ENCODE measurements at regions of chr21 and their contacts with region 1.

Region 1: GRCh38 chr21:41068967-41069642 is 98.9 kb upstream of the BACE2 start:
- DNase-seq: peak; percentile 80 to 85
- ATAC-seq: peak; percentile 86 to 92 (median 89)
- H3K4me3 ChIP-seq: peak overlapping the region in 9 of 10 donors; percentile 14 to 48 (median 41)
- H3K27ac ChIP-seq: no peak overlapping the region
- H3K4me1 ChIP-seq: peaks cover 0 to 17% (median 8%) of the 10 kb centered on the region in 9 donors
- H3K27me3 ChIP-seq: peaks cover 0 to 44% (median 14%) of the 10 kb centered on the region in 7 donors
- CTCF ChIP-seq: peak; percentile 83 to 96 (median 90)

Region 2: DNA sequence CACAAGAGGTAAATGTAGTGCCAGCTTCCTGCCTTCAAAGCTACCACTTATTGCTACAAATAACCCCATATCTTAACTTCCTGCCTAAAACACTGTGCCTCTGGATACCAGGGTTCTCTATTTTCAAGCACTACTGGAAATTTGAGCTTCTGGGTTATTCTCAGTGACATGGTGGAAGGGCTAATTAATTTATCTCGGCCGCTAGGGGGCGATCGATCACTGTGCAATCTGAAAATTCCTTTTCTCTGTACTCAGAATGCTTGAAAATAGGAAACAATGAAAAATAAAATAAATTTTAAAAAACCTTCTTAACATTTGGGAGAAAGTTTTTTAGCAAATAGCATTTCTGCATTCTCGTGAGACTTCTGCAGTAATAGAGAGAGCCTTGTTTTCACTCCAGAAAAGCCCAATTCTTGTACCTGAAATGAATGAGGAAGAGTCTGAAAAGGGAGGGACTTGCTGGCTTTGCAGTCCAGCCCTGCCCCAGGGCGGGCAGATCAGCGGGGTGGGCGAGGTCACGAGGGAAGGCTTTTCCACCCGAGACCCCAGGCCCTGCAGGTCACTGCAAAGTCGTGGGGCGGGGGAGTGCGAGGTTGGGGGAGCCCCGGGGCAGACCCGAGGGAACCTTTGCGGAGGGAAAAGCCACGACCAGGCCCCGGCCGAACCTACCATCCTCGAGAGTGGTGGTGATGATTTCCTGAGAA is 925.1 kb before region 1 on chr21:
- intact Hi-C with region 1: loop called in 9 of 10 experiments (anchors 5 to 10 kb)
- DNase-seq: peak; percentile 24 to 44
- ATAC-seq: peak in 3 of 8 donors; percentile 32 to 60 (median 53)
- H3K4me3 ChIP-seq: no peak overlapping the region
- H3K27ac ChIP-seq: no peak overlapping the region
- H3K4me1 ChIP-seq: no peaks in the 10 kb centered on the region
- H3K27me3 ChIP-seq: peaks cover 0 to 22% (median 0%) of the 10 kb centered on the region in 7 donors
- CTCF ChIP-seq: peak; percentile 45 to 84 (median 73)

Region 3: DNA sequence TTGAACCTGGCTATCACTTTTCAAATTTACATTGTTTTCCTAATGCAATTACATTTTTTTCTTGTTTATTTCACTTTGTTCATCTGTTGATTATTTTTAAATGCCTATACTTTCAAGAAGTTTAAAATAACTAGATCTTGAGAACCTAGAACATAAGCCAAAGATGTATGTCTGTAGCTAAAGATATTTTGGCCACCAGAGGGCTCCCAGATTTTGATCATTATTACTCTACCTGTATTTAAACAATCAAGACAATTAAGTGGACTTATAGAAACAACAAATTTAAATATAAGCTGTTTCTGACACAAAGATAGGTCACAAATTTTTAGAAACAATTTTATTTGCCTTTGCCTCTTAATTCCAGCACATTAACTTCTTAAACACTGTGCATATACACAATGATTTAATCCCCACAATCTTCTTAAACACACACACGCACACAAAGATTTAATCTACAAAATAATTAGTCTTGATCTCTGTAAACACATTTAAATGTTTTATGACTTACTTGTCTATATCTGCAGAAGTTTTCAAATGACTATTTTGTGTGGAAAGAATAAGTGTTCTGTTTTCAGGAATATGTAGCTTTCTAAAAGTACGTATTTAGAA is 602.1 kb before region 1 on chr21:
- intact Hi-C with region 1: loop called (anchors 1 to 10 kb)
- DNase-seq: peak in 1 of 2 donors; percentile 7
- ATAC-seq: no peak
- H3K4me3 ChIP-seq: no peak overlapping the region
- H3K27ac ChIP-seq: no peak overlapping the region
- H3K4me1 ChIP-seq: no peaks in the 10 kb centered on the region
- H3K27me3 ChIP-seq: peaks cover 0 to 11% (median 0%) of the 10 kb centered on the region in 7 donors
- CTCF ChIP-seq: peak in 8 of 9 donors; percentile 9 to 60 (median 46)

Region 4: DNA sequence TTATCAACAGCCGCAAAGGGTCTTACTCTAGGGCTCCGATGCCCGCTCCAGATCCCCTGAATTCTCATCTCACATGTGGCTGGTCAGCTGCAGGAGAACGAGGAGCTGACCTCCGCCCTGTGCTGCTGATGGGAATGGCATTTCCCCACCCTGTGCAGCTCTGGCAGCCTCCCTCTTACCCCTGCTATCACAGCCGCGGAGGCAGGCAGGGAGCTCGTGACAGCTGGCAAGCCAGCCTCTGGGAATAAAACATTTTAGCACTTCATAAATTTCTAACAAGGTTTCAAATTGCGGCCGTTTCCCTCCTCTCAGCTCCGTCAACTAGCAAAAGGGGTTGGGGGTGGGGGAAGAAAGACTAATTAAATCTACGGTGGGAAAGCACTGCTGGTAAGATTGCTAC is 303.3 kb before region 1 on chr21:
- intact Hi-C with region 1: no loop called
- DNase-seq: no peak
- ATAC-seq: no peak
- H3K4me3 ChIP-seq: no peak overlapping the region
- H3K27ac ChIP-seq: no peak overlapping the region
- H3K4me1 ChIP-seq: no peaks in the 10 kb centered on the region
- H3K27me3 ChIP-seq: peaks cover 0 to 7% (median 3%) of the 10 kb centered on the region in 7 donors
- CTCF ChIP-seq: no peak

Region 5: DNA sequence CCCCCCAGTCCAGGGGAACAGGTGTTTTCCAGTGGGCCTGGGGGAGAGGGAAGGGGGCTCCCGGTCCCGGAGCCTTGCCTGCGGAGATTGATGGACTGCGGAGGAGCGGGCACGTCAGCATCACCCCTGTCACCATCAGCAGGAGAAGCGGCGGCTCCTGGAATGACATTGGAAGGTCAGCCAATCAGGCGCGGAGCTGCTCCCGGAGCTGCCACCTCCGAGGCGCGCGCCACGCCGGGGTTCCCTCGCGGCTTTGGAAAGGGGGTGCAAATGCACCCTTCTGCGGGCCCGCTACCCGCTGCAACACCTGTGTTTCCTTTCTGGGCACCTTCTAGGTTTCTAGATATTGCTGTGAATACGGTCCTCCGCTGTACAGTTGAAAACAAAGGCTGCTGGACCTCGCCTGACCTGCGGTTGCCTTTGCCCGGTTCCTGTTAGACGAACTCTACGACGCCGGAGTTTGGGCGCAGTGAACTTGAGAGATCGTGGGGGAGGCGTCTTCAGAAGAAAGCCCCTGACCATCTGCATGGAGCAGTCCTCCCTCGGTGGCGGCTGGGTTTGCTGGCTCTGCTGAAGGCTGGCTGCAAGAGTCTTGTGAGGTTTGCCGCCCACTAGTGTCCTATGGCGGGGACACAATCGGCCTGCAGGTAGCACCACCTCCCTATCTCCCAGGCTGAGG is 227.4 kb before region 1 on chr21:
- intact Hi-C with region 1: loop called in 1 of 10 experiments (anchors 10 kb)
- DNase-seq: peak; percentile 42 to 47
- ATAC-seq: peak; percentile 47 to 92 (median 78)
- H3K4me3 ChIP-seq: peak overlapping the region in 7 of 10 donors; percentile 4 to 39 (median 28)
- H3K27ac ChIP-seq: no peak overlapping the region
- H3K4me1 ChIP-seq: peaks cover 0 to 4% (median 0%) of the 10 kb centered on the region in 9 donors
- H3K27me3 ChIP-seq: peaks cover 6 to 93% (median 70%) of the 10 kb centered on the region in 7 donors
- CTCF ChIP-seq: peak in 7 of 9 donors; percentile 31 to 61 (median 44)

Region 6: DNA sequence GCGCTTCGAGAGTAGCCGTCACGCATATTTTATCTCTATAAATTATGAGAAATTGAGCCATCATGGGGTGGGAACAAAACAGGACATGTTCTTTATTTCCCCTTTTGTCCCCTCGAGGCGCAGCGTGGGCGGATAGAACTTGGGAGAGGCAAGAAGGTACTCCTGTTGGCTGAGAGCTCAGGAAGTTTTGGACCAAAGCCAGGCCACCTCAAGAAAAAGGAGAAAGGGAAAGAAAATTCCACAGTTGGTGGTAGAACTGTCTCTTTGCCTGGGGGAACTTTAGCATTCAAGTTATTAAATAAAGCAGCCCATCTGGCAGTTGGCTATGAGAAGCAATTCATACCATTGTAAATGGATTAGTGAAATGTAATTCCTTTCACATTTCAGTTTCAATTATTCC is 145.7 kb before region 1 on chr21:
- intact Hi-C with region 1: no loop called
- DNase-seq: no peak
- ATAC-seq: no peak
- H3K4me3 ChIP-seq: no peak overlapping the region
- H3K27ac ChIP-seq: no peak overlapping the region
- H3K4me1 ChIP-seq: no peaks in the 10 kb centered on the region
- H3K27me3 ChIP-seq: no peaks in the 10 kb centered on the region
- CTCF ChIP-seq: no peak

Region 7: GRCh38 chr21:41121785-41122421 is 52.8 kb after region 1 on chr21:
- intact Hi-C with region 1: no loop called
- DNase-seq: peak; percentile 73 to 84
- ATAC-seq: peak; percentile 33 to 90 (median 86)
- H3K4me3 ChIP-seq: no peak overlapping the region
- H3K27ac ChIP-seq: no peak overlapping the region
- H3K4me1 ChIP-seq: peaks cover 0 to 11% (median 3%) of the 10 kb centered on the region in 9 donors
- H3K27me3 ChIP-seq: peaks cover 0 to 33% (median 16%) of the 10 kb centered on the region in 7 donors
- CTCF ChIP-seq: peak; percentile 82 to 95 (median 89)

Region 8: GRCh38 chr21:41247561-41248284 is 178.6 kb after region 1 on chr21:
- intact Hi-C with region 1: no loop called
- DNase-seq: peak in 1 of 2 donors; percentile 45
- ATAC-seq: peak; percentile 49 to 90 (median 79)
- H3K4me3 ChIP-seq: peak overlapping the region in 1 of 10 donors; percentile 7
- H3K27ac ChIP-seq: peak overlapping the region in 3 of 10 donors; percentile 19 to 68 (median 51)
- H3K4me1 ChIP-seq: peaks cover 0 to 8% (median 0%) of the 10 kb centered on the region in 9 donors
- H3K27me3 ChIP-seq: no peaks in the 10 kb centered on the region
- CTCF ChIP-seq: no peak

Measured in heart right ventricle (tissue), 16 donors.